ENCODE measurements at regions of chr22 and their contacts with region 1.

Region 1: GRCh38 chr22:31496007-31496734 is at the start of gene SFI1:
- DNase-seq: peak; percentile 93 to 98
- ATAC-seq: peak; percentile 88 to 95 (median 90)
- H3K4me3 ChIP-seq: peak within 1 kb of the TSS; percentile 77
- H3K4me3 Mint-ChIP-seq: peak within 1 kb of the TSS; percentile 93
- H3K27ac ChIP-seq: peak within 1 kb of the TSS; percentile 73
- H3K27ac Mint-ChIP-seq: peak within 1 kb of the TSS; percentile 92 to 94
- H3K4me1 ChIP-seq: peaks cover 31% of the 10 kb centered on the region
- H3K4me1 Mint-ChIP-seq: peaks cover 12% of the 10 kb centered on the region in 2 donors
- H3K27me3 ChIP-seq: no peaks in the 10 kb centered on the region
- H3K27me3 Mint-ChIP-seq: no peaks in the 10 kb centered on the region
- CTCF ChIP-seq: peak; percentile 17
- total RNA-seq, gene SFI1: 208 to 225 (median 217) TPM

Region 2: GRCh38 chr22:31272522-31273446 is 223.4 kb before region 1 on chr22:
- intact Hi-C with region 1: no loop called
- DNase-seq: peak in 1 of 2 donors; percentile 79
- ATAC-seq: peak; percentile 60 to 74 (median 62)
- H3K4me3 ChIP-seq: no peak overlapping the region
- H3K4me3 Mint-ChIP-seq: no peak overlapping the region
- H3K27ac ChIP-seq: no peak overlapping the region
- H3K27ac Mint-ChIP-seq: no peak overlapping the region
- H3K4me1 ChIP-seq: peaks cover under 1% of the 10 kb centered on the region
- H3K4me1 Mint-ChIP-seq: peaks cover 0 to 8% of the 10 kb centered on the region in 2 donors
- H3K27me3 ChIP-seq: no peaks in the 10 kb centered on the region
- H3K27me3 Mint-ChIP-seq: no peaks in the 10 kb centered on the region
- CTCF ChIP-seq: peak; percentile 54

Region 3: DNA sequence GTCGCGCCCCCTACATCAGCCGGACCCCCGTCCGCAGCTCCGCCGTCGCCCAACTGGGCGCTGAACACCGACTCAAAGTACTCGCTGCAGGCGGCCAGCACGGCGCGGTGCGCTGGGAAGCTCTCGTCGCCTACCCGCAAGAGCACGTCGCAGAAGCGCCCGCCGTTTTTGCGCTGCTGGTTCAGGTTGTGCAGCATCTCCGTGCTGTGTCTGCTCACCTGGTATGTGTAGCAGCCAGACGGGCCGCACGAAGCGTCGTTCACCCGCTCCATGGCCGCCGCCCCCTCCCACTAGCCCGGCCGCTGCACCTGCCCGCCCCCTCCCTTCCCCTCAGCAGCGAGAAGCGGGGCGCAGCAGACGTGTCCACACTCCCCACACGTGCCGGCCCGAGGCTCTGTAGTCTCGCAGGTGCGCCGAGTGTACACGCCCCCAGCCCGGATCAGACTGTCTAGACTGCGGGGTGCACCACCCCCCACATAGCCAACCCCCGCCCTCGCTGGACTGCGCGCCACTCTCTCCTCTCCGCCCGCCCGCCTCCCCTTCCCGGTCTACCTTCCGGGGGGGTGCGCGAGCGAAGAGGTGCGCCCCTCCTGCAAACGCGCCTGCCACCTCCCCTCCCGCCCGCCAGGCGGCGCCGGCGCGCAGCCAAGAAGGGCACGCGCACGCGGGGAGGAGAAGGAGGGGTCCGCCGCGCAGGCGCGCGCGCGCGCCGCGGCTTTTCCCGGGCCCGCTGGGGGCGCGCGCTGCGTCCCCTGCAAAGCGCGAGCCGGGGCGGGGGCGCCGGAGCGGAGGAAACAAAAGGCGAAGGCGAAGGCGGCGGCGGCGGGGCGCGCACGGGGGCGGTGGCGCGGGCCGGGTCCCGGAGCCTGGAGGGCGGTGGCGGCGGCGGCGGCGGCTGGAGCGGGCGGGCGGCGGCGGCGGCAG is 150.6 kb before region 1 on chr22:
- intact Hi-C with region 1: loop called (anchors 10 kb)
- DNase-seq: peak; percentile 85 to 97
- ATAC-seq: peak; percentile 73 to 87 (median 77)
- H3K4me3 ChIP-seq: peak overlapping the region; percentile 72
- H3K4me3 Mint-ChIP-seq: peak overlapping the region; percentile 85
- H3K27ac ChIP-seq: peak overlapping the region; percentile 8
- H3K27ac Mint-ChIP-seq: peak overlapping the region; percentile 76 to 82
- H3K4me1 ChIP-seq: peaks cover 60% of the 10 kb centered on the region
- H3K4me1 Mint-ChIP-seq: peaks cover 48 to 51% of the 10 kb centered on the region in 2 donors
- H3K27me3 ChIP-seq: no peaks in the 10 kb centered on the region
- H3K27me3 Mint-ChIP-seq: no peaks in the 10 kb centered on the region
- CTCF ChIP-seq: peak; percentile 81

Region 4: GRCh38 chr22:31477329-31477728 is 18.8 kb before region 1 on chr22:
- intact Hi-C with region 1: no loop called
- DNase-seq: no peak
- ATAC-seq: no peak
- H3K4me3 ChIP-seq: no peak overlapping the region
- H3K4me3 Mint-ChIP-seq: no peak overlapping the region
- H3K27ac ChIP-seq: no peak overlapping the region
- H3K27ac Mint-ChIP-seq: no peak overlapping the region
- H3K4me1 ChIP-seq: no peaks in the 10 kb centered on the region
- H3K4me1 Mint-ChIP-seq: peaks cover 16 to 17% of the 10 kb centered on the region in 2 donors
- H3K27me3 ChIP-seq: no peaks in the 10 kb centered on the region
- H3K27me3 Mint-ChIP-seq: no peaks in the 10 kb centered on the region
- CTCF ChIP-seq: no peak

Region 5: DNA sequence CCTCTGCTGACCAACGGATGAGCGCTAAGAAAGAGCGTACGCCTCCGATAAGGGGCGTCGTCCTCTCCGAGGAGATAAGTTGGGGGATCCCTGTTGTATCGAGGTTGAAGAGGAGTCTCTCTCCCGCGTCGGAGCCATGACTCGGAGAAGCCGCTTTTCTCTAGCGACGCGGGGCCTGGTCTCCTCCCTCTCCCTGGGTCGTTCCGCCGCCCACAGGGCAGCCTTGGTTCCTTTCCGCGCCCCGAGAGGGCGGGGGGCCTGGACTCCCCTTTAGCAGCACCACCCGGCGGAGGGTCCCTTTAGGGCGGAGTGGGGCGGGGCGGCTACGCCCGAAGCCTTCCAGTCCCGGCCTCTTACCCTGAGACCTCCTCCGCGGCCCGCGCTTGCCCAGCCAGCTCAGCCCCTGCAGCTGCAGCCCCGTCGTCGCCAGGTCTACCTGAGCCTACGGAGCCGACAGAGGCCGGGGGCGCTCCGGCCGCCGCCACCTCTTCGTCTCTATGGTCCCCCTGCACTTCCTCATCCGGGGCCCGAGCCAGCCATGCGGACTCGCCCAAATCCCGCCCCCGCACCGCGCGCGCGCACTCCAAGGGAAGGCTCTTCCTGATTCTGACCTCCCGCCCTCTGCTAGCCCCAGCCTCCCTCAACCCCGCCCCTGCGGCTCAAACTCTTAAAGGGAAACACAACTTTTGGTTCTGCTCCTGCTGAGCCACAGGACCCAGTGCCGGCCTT is 253.6 kb after region 1 on chr22 and contains the start of gene PRR14L:
- intact Hi-C with region 1: loop called (anchors 5 kb)
- DNase-seq: peak; percentile 97 to 99
- ATAC-seq: peak; percentile 76 to 93 (median 79)
- H3K4me3 ChIP-seq: peak within 1 kb of the TSS; percentile 92
- H3K4me3 Mint-ChIP-seq: peak within 1 kb of the TSS; percentile 98
- H3K27ac ChIP-seq: peak within 1 kb of the TSS; percentile 81
- H3K27ac Mint-ChIP-seq: peak within 1 kb of the TSS; percentile 87 to 89
- H3K4me1 ChIP-seq: peaks cover 42% of the 10 kb centered on the region
- H3K4me1 Mint-ChIP-seq: peaks cover 47 to 56% of the 10 kb centered on the region in 2 donors
- H3K27me3 ChIP-seq: no peaks in the 10 kb centered on the region
- H3K27me3 Mint-ChIP-seq: no peaks in the 10 kb centered on the region
- CTCF ChIP-seq: no peak
- total RNA-seq, gene PRR14L: 39.3 to 54.1 (median 54.0) TPM

Measured in natural killer cell (primary cell).